ENCODE measurements at regions of chr1 and their contacts with region 1.

Region 1: DNA sequence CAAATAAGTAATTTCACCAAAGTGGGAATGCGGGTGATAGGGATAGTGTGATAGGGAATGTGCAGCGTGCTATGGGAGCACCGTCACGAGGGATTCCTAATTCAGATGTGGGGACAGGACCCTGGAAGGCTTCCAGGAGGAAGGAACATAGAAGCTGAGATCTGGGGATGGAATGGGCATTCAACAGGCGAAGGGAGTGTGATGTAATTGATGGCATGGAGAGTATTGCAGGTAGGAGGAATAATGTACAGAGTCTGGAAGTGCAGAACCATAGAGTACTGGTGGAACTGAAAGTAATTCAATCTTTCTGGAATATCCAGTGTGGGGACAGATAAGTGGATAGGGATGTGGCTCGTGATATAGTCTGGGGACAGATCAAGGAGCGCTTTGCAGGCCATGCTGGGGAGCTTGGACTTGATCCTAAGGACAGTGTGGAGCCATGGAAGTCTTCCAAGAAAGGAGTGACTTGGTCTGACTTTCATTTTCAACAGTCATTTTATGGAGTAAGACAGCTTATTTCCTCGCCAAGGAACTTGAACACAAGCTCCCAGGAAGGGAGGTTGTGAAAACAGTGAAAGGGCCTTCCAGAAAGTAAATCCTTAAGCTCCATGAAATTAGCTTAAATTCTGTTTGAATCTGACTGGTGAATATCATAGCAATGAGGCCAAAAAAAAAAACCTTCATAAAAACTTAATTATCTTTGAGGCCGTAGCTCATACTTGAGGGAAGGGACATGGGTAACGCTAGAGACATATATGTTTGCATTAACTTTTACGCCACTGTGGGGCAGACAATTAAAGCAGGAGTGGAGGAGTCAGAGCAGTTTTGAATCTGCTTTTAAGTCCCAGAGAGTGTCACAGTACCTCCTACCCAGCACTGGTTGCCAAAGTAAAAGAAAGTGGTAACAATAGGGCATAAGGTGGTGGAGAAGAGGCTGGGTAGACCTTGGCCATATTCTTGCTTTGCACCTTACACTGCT is 55.8 kb downstream of the ROR1 start:
- DNase-seq: no peak
- ATAC-seq: no peak
- H3K4me3 ChIP-seq: no peak overlapping the region
- H3K27ac ChIP-seq: no peak overlapping the region
- H3K4me1 ChIP-seq: peaks cover 6% of the 10 kb centered on the region; the same call in 1 of the 2 replicates
- H3K27me3 ChIP-seq: no peaks in the 10 kb centered on the region
- CTCF ChIP-seq: no peak
- POLR2A ChIP-seq: no peak
- RAD21 ChIP-seq: no peak

Region 2: GRCh38 chr1:64841330-64842065 is 1011.9 kb after region 1 on chr1:
- CTCF ChIA-PET with region 1: no interaction called
- POLR2A ChIA-PET with region 1: interaction called, 13 read pairs
- dilution Hi-C with region 1: no loop called
- in situ Hi-C with region 1: no loop called
- intact Hi-C with region 1: no loop called
- DNase-seq: no peak
- ATAC-seq: peak; percentile 53
- H3K4me3 ChIP-seq: no peak overlapping the region
- H3K27ac ChIP-seq: no peak overlapping the region
- H3K4me1 ChIP-seq: peaks cover 5% of the 10 kb centered on the region; the same call in 1 of the 2 replicates
- H3K27me3 ChIP-seq: no peaks in the 10 kb centered on the region
- CTCF ChIP-seq: no peak
- POLR2A ChIP-seq: no peak
- RAD21 ChIP-seq: no peak